CD8-positive, alpha-beta T cell (primary cell): ENCODE measurements at regions of chr10 and their contacts with region 1.

Region 1: DNA sequence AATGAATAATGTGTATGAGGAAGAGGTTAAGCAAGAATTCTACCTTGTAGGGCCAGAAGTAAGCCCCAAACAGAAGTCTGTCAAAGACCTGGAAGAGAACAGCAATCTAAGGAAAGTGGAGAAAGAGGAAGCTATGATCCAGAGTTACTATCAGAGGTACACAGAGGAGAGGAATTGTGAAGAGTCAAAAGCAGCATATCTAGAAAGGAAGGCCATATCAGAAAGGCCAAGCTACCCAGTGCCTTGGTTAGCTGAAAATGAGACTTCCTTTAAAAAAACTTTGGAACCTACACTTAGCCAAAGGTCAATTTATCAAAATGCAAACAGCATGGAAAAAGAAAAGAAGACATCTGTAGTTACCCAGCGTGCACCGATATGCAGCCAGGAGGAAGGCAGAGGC is 42.7 kb upstream of the GAD2 start:
- DNase-seq: no peak
- ATAC-seq: no peak
- H3K4me3 ChIP-seq: no peak overlapping the region
- H3K4me3 Mint-ChIP-seq: no peak overlapping the region
- H3K27ac ChIP-seq: no peak overlapping the region
- H3K27ac Mint-ChIP-seq: no peak overlapping the region
- H3K4me1 ChIP-seq: no peaks in the 10 kb centered on the region
- H3K4me1 Mint-ChIP-seq: no peaks in the 10 kb centered on the region
- H3K27me3 ChIP-seq: no peaks in the 10 kb centered on the region
- H3K27me3 Mint-ChIP-seq: peaks cover 32% of the 10 kb centered on the region
- CTCF ChIP-seq: no peak

Region 2: GRCh38 chr10:26112532-26112931 is 61.3 kb before region 1 on chr10:
- CTCF ChIA-PET with region 1: no interaction called
- POLR2A ChIA-PET with region 1: no interaction called
- intact Hi-C with region 1: loop called in 1 of 2 experiments (anchors 2 kb)
- DNase-seq: no peak
- ATAC-seq: no peak
- H3K4me3 ChIP-seq: no peak overlapping the region
- H3K4me3 Mint-ChIP-seq: no peak overlapping the region
- H3K27ac ChIP-seq: no peak overlapping the region
- H3K27ac Mint-ChIP-seq: no peak overlapping the region
- H3K4me1 ChIP-seq: no peaks in the 10 kb centered on the region
- H3K4me1 Mint-ChIP-seq: no peaks in the 10 kb centered on the region
- H3K27me3 ChIP-seq: no peaks in the 10 kb centered on the region
- H3K27me3 Mint-ChIP-seq: peaks cover 28% of the 10 kb centered on the region
- CTCF ChIP-seq: no peak

Region 3: DNA sequence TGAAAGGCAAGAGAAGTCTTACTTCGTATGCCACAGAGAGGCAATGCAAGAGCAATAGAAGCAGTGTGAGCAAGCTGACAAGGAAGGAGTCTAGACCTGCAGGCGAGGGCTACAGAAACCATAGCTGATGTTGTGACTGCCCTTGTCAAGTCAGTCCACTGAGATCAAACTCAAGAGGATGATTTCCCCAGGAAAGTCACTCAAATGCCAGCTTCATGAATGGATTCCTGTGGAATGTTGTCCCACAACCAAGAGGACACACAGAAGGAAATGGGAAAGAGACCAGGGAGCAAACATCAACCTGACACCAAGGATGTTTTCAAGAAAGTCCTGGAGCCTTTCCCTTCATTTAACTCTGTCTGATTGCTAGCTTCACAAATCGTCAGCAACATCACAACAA is 35.2 kb before region 1 on chr10:
- CTCF ChIA-PET with region 1: no interaction called
- POLR2A ChIA-PET with region 1: no interaction called
- intact Hi-C with region 1: no loop called
- DNase-seq: no peak
- ATAC-seq: no peak
- H3K4me3 ChIP-seq: no peak overlapping the region
- H3K4me3 Mint-ChIP-seq: no peak overlapping the region
- H3K27ac ChIP-seq: no peak overlapping the region
- H3K27ac Mint-ChIP-seq: no peak overlapping the region
- H3K4me1 ChIP-seq: no peaks in the 10 kb centered on the region
- H3K4me1 Mint-ChIP-seq: no peaks in the 10 kb centered on the region
- H3K27me3 ChIP-seq: peaks cover 0 to 2% of the 10 kb centered on the region in 2 experiments
- H3K27me3 Mint-ChIP-seq: peaks cover 26% of the 10 kb centered on the region
- CTCF ChIP-seq: no peak